Psoas muscle (tissue), 8 donors: ENCODE measurements at regions of chr6 and their contacts with region 1.

Region 1: DNA sequence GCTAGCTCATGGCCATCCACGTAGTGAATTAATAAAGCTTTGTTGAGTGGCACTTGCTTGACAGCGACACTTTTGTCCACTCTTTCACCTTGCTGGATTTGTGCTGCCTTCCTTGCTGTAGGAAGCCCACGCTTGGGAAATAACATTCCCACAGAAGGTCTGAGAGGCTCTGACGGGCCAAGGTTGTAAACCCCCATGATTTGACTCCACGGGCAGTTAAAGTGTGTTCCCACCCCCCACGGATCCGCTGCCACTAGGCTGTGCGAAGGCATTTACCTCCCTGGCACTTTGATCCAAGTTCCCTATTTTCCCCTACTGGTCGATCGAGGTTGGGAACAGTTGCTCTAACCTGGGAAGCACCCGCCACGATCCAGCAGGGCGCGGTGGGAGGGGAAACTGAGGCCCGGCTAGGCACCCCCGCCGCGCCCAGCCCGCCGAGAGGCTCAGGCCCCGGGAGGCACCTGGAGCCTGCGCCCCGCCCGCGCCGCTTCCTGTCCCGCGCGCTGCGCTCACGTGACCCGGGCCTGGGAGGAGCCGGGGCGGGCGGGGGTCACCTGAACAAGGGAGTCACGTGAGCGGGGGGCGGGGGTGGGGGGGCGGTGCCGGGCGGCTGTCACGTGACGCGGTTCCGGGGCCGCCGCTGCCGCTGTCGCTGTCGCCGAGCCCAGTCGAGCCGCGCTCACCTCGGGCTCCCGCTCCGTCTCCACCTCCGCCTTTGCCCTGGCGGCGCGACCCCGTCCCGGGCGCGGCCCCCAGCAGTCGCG is at the start of gene IGF2R:
- DNase-seq: peak; percentile 96 to 97
- ATAC-seq: peak; percentile 90 to 94 (median 91)
- H3K4me3 ChIP-seq: peak within 1 kb of the TSS; percentile 89
- H3K27ac ChIP-seq: peak within 1 kb of the TSS; percentile 97
- H3K4me1 ChIP-seq: peaks cover 41% of the 10 kb centered on the region
- H3K27me3 ChIP-seq: no peaks in the 10 kb centered on the region
- CTCF ChIP-seq: no peak
- total RNA-seq, gene IGF2R: 113 to 167 (median 157) TPM

Region 2: DNA sequence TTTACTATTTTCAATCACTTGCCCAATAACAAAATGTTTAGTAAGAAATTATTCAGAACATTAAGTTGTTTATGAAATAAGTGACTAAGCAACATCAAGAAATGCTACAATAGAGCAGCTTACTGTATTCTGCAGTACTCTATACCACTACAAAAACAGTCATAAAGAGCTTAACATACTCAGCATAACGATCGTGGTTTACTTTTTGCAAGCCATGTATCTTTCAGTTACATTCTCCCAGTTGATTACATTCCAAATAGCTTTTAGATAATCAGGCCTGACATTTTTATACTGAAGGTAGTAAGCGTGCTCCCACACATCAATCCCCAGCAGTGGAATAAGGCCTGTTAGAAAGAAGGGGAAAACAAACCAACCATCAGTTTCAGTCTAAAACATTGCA is 286.3 kb before region 1 on chr6:
- intact Hi-C with region 1: no loop called
- DNase-seq: no peak
- ATAC-seq: no peak
- H3K4me3 ChIP-seq: no peak overlapping the region
- H3K27ac ChIP-seq: peak overlapping the region; percentile 53
- H3K4me1 ChIP-seq: peaks cover 31% of the 10 kb centered on the region
- H3K27me3 ChIP-seq: no peaks in the 10 kb centered on the region
- CTCF ChIP-seq: no peak

Region 3: DNA sequence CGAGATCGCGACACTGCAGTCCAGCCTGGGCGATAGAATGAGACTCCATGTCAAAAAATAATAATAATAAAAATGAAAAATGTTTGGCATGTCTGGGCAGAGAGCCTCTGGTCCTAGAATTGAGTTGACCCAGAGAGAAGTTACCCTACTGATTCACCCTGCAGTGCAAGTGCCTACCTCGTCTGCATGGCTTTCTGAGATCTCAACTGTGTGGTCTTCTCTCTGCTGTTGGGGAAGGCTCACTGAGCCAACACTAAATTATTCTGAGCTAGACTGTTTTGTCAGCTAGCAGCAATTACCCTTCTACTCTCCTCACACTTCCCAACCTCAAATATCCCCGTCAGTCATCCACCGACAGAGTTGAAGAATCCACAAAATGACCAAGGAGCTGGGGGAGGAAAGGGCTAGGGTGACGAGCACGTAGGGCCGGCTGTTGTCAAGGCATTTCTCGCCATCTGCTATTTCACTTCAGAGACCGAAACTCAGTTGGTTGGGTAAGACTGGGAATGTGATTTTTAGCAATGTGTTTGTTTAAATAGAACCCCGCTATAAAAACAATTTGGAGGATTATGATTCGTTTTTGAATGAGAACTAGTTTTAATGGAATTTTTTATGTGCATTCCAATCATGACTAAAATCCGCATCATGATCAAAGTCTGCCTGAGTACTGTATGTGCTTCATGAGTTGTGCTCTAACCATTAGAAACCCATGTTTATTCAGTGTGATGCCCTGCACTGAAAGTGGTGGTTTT is 68.5 kb before region 1 on chr6:
- intact Hi-C with region 1: no loop called
- DNase-seq: no peak
- ATAC-seq: no peak
- H3K4me3 ChIP-seq: no peak overlapping the region
- H3K27ac ChIP-seq: no peak overlapping the region
- H3K4me1 ChIP-seq: no peaks in the 10 kb centered on the region
- H3K27me3 ChIP-seq: no peaks in the 10 kb centered on the region
- CTCF ChIP-seq: no peak

Region 4: GRCh38 chr6:159919011-159919511 is 49.6 kb before region 1 on chr6:
- intact Hi-C with region 1: no loop called
- DNase-seq: no peak
- ATAC-seq: no peak
- H3K4me3 ChIP-seq: no peak overlapping the region
- H3K27ac ChIP-seq: no peak overlapping the region
- H3K4me1 ChIP-seq: no peaks in the 10 kb centered on the region
- H3K27me3 ChIP-seq: no peaks in the 10 kb centered on the region
- CTCF ChIP-seq: no peak

Region 5: GRCh38 chr6:160005861-160006540 is 37.4 kb after region 1 on chr6:
- intact Hi-C with region 1: loop called in 1 of 2 experiments (anchors 5 kb)
- DNase-seq: peak; percentile 66 to 75
- ATAC-seq: peak; percentile 71 to 74 (median 72)
- H3K4me3 ChIP-seq: no peak overlapping the region
- H3K27ac ChIP-seq: no peak overlapping the region
- H3K4me1 ChIP-seq: peaks cover 38% of the 10 kb centered on the region
- H3K27me3 ChIP-seq: no peaks in the 10 kb centered on the region
- CTCF ChIP-seq: no peak

Region 6: DNA sequence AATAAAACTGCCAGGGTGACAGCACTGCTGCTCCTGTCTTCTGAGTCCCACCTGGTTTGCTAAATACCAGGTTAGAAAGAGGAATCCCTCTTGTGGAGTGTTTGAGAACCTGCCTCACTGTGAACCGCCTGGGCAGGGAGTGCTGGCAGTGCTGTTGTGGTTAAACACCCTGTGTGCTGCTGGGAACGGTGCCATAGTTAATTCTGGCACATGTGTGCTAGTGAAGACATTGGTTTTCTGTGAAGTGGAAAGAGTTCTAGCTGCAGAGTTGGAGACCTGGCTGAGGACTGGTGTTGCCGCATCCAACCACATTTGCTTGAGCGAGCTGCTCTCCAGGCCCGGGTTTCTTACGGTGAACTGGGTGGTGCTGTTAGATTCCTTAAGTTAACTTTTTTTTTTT is 73.0 kb after region 1 on chr6:
- intact Hi-C with region 1: loop called in 1 of 2 experiments (anchors 5 kb)
- DNase-seq: peak; percentile 63 to 80
- ATAC-seq: peak; percentile 82 to 91 (median 88)
- H3K4me3 ChIP-seq: no peak overlapping the region
- H3K27ac ChIP-seq: peak overlapping the region; percentile 59
- H3K4me1 ChIP-seq: peaks cover 25% of the 10 kb centered on the region
- H3K27me3 ChIP-seq: no peaks in the 10 kb centered on the region
- CTCF ChIP-seq: peak; percentile 49